PC-3 (cell line): ENCODE measurements at regions of chr9 and their contacts with region 1.

Region 1: DNA sequence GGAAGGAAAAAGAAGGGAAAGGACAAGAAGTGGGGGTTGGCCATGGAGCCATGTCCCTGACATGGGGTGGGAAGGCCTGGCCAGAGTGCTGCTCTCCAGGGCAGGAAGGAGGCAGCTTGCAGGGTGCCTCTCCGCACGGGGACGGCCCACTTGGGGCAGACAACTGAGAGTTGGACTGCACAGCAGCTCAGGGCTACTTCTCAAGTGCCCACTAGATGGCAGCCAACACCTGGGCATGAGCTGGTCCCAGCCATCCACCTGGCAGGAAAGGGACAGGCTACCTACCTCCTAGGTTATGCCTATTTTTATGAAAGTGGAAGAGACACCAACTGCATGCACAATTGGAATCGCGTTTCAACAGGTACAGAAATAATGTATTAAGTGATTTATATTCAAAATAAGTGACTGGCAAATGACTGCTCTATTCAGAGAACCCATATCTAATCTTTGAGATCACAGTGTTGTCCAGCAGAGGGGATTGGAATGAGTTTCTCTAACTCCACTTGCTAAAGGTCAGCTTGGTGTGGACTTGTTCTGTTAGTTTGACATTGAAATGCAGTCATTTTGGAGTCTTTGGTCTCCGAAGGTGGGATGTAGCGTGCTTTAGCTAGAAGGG is 113.4 kb downstream of the SYK start:
- DNase-seq: peak; percentile 80
- ATAC-seq: peak; percentile 97
- H3K4me3 ChIP-seq: no peak overlapping the region
- H3K27ac ChIP-seq: no peak overlapping the region
- H3K4me1 ChIP-seq: no peaks in the 10 kb centered on the region
- H3K27me3 ChIP-seq: no peaks in the 10 kb centered on the region
- CTCF ChIP-seq: peak; percentile 77

Region 2: DNA sequence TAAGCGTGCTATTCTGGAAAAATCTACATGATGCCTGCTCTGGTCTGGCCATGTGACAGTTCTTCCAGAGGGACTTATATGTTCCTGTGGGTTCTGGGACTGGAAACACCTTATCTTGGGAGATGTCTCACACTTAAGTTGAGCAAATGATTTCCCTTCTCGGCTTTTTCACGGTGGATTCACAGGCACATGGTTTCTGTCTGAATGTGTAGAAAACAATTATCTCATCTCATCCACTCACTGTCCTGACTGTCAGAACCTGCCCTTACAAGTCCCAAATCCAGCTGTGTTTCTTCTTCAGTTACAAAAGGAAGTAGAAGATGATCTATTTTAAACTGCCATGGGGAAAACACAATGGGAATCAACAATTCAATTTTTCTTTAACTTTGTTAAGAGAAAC is 70.7 kb after region 1 on chr9:
- CTCF ChIA-PET with region 1: interaction called, 6 read pairs
- POLR2A ChIA-PET with region 1: no interaction called
- intact Hi-C with region 1: loop called (anchors 2 kb)
- DNase-seq: no peak
- ATAC-seq: no peak
- H3K4me3 ChIP-seq: no peak overlapping the region
- H3K27ac ChIP-seq: peak overlapping the region; percentile 26; the same call in 1 of the 2 replicates
- H3K4me1 ChIP-seq: peaks cover 4% of the 10 kb centered on the region; the same call in 1 of the 2 replicates
- H3K27me3 ChIP-seq: no peaks in the 10 kb centered on the region
- CTCF ChIP-seq: no peak

Region 3: DNA sequence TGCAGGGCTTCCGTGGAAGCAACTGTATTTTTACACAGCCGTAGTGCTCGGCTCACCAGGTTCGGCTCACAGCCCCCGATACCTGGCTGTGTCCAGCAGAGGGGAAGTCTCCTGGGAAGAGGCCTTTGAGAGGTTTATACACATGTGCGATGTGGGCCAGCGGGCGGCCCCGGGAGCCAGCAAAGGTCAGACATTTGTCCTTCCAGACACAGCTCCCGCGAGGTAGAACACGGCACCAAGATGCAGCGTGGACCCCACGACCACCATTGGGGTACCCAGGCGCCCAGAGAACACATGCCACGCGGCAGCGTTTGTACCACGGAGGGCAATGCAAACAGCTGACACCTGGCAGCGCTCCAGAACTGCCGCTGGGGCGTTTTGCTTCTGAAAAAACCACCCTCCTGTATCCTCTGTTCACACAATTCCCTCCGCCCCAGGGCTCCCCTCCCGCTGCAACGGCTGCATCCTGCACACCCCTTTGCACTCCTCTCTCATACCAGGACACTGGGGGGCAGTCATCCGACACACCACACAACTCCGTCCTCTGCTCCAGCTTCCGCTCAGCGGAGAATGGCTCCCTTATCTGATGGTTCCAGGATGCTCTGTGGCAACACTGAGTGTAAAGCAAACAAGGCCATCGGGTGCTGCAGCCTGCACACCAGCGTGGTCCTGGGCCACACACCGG is 122.0 kb after region 1 on chr9:
- CTCF ChIA-PET with region 1: no interaction called
- POLR2A ChIA-PET with region 1: interaction called, 4 read pairs
- intact Hi-C with region 1: loop called (anchors 2 kb)
- DNase-seq: peak; percentile 85
- ATAC-seq: peak; percentile 91
- H3K4me3 ChIP-seq: peak overlapping the region; percentile 32; the same call in 1 of the 2 replicates
- H3K27ac ChIP-seq: peak overlapping the region; percentile 88
- H3K4me1 ChIP-seq: peaks cover 27% of the 10 kb centered on the region
- H3K27me3 ChIP-seq: no peaks in the 10 kb centered on the region
- CTCF ChIP-seq: peak; percentile 68

Region 4: DNA sequence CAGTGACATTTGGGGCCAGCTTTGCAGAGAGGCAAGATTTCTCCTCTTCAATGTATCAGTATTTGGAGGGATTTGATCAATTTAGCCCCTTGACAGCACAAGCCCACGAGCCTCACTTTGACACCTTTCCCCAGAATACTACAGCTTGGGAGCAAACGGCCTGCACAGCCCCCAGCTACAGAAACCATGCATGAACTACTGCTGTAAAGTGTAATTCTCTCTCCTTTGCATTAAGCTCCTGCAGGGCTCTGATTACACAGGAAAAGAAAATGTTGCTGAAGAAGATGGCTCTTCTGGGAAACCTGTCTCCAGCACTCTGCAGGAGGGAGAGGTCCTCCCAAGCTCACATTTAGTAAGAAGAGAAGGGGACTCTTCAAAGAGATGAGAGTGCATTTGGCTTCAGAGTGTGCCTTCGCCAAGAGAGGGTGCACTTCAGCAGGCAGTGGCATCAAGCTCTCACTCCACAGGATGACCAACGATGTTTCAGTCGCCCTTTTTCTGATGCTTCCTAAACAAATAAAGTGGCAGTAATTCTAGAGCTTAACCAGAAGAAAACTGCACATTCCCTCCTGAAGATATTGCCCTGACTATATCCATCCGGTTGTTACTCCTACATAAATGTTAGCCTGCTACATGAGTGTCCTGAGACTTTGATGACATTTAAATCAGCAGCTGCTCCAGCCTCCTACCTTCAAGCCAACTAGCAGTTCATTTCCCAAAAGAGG is 174.6 kb after region 1 on chr9:
- CTCF ChIA-PET with region 1: interaction called, 7 read pairs
- POLR2A ChIA-PET with region 1: no interaction called
- intact Hi-C with region 1: loop called (anchors 10 kb)
- DNase-seq: peak; percentile 64
- ATAC-seq: peak; percentile 96
- H3K4me3 ChIP-seq: no peak overlapping the region
- H3K27ac ChIP-seq: 0 out of 2 replicates have a peak overlapping the region, but pooled peaks have one; percentile 6
- H3K4me1 ChIP-seq: no peaks in the 10 kb centered on the region
- H3K27me3 ChIP-seq: no peaks in the 10 kb centered on the region
- CTCF ChIP-seq: peak; percentile 67

Region 5: DNA sequence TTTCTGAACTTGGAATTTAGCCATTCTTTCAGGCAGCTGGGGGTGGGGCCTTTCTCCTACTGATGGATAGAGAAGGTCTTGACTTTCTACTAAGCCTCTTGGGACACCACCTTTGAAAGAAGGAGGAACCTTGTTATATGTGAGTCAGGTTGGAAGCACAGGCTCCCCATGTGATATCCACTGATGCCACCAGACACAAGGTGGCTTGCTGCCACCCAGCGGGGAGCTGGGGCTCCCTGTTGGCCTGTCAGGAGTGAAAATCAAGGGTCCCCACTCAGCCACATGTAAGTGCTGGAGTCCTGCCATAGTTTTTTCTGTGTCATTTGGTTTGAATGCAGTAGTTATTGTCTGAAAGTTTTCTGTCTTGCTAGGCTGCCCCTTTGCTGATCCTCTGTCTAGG is 761.1 kb after region 1 on chr9:
- CTCF ChIA-PET with region 1: no interaction called
- POLR2A ChIA-PET with region 1: no interaction called
- intact Hi-C with region 1: loop called (anchors 1 kb)
- DNase-seq: peak; percentile 64
- ATAC-seq: peak; percentile 80
- H3K4me3 ChIP-seq: no peak overlapping the region
- H3K27ac ChIP-seq: no peak overlapping the region
- H3K4me1 ChIP-seq: peaks cover 16% of the 10 kb centered on the region
- H3K27me3 ChIP-seq: no peaks in the 10 kb centered on the region
- CTCF ChIP-seq: peak; percentile 74

Region 6: DNA sequence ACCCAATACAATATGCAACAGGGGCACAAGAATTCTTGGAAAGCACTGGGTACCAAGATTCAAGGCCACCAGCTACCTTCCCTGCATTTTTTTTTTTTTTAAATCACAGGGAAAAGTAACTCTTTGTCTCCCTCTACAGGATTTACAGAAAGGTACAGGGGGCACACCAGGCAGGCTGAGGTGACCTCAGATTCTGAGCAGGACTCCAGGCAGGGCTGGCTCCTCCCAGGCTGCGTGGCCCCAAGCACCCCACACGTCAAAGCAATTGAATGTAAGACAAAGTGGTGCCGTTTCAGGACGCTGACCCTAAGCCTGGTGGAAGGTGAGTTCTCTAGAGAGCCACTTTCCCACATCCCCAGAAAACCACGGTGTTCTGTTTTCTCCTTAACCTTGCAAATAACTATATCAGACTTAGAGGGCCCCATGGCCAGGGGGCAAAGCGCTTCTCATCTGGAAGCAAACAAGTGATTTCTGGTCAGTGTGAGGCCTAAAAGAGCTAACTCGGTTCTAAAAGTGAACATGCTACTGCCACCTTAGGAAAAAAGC is 812.4 kb after region 1 on chr9:
- CTCF ChIA-PET with region 1: interaction called, 7 read pairs
- POLR2A ChIA-PET with region 1: no interaction called
- intact Hi-C with region 1: loop called (anchors 1 kb)
- DNase-seq: peak; percentile 61
- ATAC-seq: peak; percentile 75
- H3K4me3 ChIP-seq: no peak overlapping the region
- H3K27ac ChIP-seq: no peak overlapping the region
- H3K4me1 ChIP-seq: no peaks in the 10 kb centered on the region
- H3K27me3 ChIP-seq: no peaks in the 10 kb centered on the region
- CTCF ChIP-seq: peak; percentile 69